WTC11 (cell line): ENCODE measurements at regions of chr21 and their contacts with region 1.

Region 1: DNA sequence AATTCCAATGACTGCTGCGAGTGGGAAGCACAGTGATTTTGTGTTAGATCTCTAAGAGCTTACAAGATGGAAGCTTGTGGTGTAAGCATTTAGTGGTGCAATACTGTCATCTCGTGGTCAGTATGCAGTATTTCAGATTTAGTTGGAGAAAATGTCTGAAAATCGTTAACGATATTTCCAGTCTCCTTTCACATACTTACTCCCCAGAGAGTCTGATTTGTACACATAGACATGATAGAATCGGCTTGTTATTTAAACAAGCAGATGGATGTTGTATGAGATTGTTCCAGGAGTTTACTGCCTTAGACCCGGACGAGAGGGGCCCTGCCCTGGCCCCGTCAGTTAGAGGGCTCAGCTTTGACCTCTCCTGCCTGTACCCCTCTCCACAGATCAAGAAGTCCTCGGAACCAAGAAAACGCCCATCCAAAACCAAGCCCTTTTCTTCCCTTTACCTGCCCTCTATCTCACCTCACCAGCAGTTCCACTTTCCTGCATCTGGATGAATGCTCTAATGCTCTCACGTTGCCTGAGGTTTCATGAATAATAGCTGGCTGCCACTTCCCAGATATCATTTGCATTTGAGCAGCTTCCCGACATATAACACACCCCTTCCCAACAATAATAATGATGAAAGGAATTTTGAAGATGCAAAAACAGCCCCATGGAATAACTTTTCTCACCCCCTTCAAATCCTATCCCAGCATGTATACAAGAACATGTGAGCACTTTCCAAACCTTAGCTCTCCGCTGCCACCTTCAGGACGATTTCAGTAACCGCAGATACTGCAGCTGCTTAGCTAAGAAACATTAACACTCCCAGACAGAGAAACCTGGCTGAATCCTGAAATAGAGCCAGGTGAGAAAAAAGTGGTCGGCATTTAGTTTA is 247.3 kb downstream of the LTN1 start:
- DNase-seq: peak; percentile 75
- ATAC-seq: peak; percentile 91
- H3K4me3 Mint-ChIP-seq: no peak overlapping the region
- H3K27ac Mint-ChIP-seq: no peak overlapping the region
- H3K4me1 Mint-ChIP-seq: no peaks in the 10 kb centered on the region
- H3K27me3 Mint-ChIP-seq: no peaks in the 10 kb centered on the region
- CTCF ChIP-seq: peak; percentile 64

Region 2: DNA sequence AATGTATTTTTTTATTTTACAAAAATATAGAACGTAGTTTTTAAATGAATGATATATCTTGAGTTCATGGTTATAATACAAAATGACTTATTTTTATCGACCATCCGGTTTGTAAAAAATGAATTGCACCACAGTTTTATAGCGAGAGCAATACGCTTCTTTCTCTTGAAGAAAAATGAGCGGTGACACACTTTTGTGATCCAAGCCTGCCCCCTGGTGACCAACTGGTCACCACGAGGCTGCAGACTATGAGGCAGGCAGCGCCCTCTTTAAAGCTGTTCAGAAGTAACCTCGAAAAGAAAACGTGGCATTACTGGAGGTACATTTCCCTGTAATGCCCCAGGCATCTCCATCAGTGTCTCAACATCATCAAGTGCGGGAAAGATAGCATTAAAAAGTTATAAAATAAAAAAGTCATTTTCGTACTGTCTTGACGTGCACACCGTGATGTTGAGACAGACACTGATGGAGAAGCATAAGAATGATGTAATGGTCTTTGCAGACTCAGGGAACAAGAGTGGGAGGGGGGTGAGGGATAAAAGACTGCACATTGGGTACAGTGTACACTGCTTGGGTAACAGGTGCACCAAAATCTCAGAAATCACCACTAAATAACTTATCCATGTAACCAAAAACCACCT is 1044.3 kb before region 1 on chr21:
- CTCF ChIA-PET with region 1: interaction called, 13 read pairs
- POLR2A ChIA-PET with region 1: no interaction called
- DNase-seq: peak; percentile 81
- ATAC-seq: peak; percentile 86
- H3K4me3 Mint-ChIP-seq: no peak overlapping the region
- H3K27ac Mint-ChIP-seq: no peak overlapping the region
- H3K4me1 Mint-ChIP-seq: no peaks in the 10 kb centered on the region
- H3K27me3 Mint-ChIP-seq: no peaks in the 10 kb centered on the region
- CTCF ChIP-seq: peak; percentile 75

Region 3: DNA sequence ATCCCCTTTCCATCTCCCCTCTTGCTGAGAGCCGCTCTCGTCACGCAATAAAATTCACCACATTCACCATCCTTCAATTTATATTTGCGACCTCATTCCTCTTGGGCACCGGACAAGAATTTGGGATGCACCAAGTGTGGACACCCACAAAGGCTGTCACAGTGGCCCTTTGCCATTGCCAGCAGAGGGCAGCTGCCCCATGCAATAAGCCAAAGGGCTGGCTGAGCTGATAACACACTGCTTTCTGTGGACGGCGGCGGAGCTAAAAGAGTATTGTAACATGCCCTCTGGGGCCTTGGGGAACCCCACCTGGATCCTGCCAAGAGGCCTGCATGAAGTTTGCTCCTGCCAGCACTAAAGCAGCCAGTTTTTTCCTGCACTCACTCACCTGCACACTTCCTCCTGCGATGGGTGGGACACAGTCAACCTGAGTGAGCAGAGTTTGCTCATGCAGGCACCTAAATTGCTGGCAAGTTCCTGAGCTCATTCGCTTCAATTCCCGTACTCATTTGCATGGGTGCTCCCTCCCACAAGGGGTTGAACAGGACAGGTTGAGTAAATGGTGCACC is 986.2 kb before region 1 on chr21:
- CTCF ChIA-PET with region 1: interaction called, 21 read pairs
- POLR2A ChIA-PET with region 1: no interaction called
- DNase-seq: peak; percentile 68
- ATAC-seq: peak; percentile 90
- H3K4me3 Mint-ChIP-seq: no peak overlapping the region
- H3K27ac Mint-ChIP-seq: peak overlapping the region; percentile 42; the same call in 1 of the 2 replicates
- H3K4me1 Mint-ChIP-seq: peaks cover 25% of the 10 kb centered on the region
- H3K27me3 Mint-ChIP-seq: no peaks in the 10 kb centered on the region
- CTCF ChIP-seq: no peak

Region 4: DNA sequence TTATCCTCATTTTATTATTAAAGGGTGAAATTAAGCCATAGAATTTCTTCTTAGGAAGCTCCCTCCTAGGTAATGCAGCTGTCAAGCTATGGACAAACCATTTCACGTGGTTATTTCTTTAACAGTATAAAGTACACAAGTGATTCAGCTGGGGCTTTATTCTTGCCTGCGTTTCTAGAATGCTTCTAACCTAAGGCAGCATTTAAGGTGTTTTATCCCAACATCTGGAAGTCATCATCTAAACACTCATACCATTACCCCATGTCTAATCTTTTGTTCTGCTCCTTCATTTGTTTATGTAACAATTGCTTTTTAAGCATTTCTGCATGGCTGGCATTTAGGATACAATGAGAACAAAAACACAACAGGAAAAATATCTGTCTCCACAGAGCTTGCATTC is 949.3 kb before region 1 on chr21:
- CTCF ChIA-PET with region 1: no interaction called
- POLR2A ChIA-PET with region 1: no interaction called
- DNase-seq: no peak
- ATAC-seq: no peak
- H3K4me3 Mint-ChIP-seq: no peak overlapping the region
- H3K27ac Mint-ChIP-seq: peak overlapping the region; percentile 13; the same call in 1 of the 2 replicates
- H3K4me1 Mint-ChIP-seq: peaks cover 22% of the 10 kb centered on the region
- H3K27me3 Mint-ChIP-seq: no peaks in the 10 kb centered on the region
- CTCF ChIP-seq: no peak

Region 5: DNA sequence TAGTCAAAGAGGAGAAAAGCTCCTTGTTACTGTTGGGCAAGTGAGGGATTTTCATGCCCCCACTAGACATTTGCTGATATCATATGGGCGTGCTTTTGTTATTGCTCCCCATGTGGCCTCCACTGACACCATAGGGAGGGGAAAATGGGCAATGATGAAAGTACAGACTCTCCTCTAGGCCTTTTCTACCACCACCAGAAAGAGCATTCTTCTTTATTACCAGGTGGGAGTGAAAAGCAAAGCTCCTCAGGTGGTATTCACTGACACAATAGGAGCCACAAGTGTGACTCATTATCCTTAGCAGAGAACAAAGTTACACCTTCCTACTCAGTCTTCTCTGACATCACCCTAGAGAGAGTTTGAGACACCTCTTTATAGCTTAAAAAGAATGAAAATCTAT is 419.8 kb before region 1 on chr21:
- CTCF ChIA-PET with region 1: interaction called, 11 read pairs
- POLR2A ChIA-PET with region 1: no interaction called
- DNase-seq: no peak
- ATAC-seq: peak; percentile 98
- H3K4me3 Mint-ChIP-seq: no peak overlapping the region
- H3K27ac Mint-ChIP-seq: peak overlapping the region; percentile 87
- H3K4me1 Mint-ChIP-seq: peaks cover 20% of the 10 kb centered on the region
- H3K27me3 Mint-ChIP-seq: no peaks in the 10 kb centered on the region
- CTCF ChIP-seq: no peak

Region 6: DNA sequence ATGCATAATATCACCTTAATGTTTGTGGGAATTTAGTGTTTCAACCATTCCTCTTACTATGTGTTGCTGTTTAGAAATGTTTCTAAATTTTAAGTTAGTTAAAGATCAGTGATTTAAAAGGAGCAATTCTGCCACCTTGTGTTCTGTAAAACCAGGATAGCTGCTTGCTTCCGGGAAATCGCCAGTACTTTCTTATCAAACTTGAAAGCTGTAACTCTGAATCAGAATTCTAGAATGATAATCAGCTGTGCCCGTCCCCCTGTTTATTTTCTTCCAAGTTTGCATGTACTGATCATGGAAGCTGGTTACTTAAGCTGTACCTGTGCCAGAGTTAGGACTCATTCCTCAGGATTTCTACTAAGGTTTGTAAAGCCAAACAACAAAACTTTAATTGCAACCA is 409.1 kb before region 1 on chr21:
- CTCF ChIA-PET with region 1: interaction called, 26 read pairs
- POLR2A ChIA-PET with region 1: no interaction called
- DNase-seq: no peak
- ATAC-seq: no peak; the same call in 1 of the 2 replicates
- H3K4me3 Mint-ChIP-seq: no peak overlapping the region
- H3K27ac Mint-ChIP-seq: no peak overlapping the region
- H3K4me1 Mint-ChIP-seq: peaks cover 3% of the 10 kb centered on the region; the same call in 1 of the 2 replicates
- H3K27me3 Mint-ChIP-seq: no peaks in the 10 kb centered on the region
- CTCF ChIP-seq: peak; percentile 24; the same call in 1 of the 2 replicates

Region 7: DNA sequence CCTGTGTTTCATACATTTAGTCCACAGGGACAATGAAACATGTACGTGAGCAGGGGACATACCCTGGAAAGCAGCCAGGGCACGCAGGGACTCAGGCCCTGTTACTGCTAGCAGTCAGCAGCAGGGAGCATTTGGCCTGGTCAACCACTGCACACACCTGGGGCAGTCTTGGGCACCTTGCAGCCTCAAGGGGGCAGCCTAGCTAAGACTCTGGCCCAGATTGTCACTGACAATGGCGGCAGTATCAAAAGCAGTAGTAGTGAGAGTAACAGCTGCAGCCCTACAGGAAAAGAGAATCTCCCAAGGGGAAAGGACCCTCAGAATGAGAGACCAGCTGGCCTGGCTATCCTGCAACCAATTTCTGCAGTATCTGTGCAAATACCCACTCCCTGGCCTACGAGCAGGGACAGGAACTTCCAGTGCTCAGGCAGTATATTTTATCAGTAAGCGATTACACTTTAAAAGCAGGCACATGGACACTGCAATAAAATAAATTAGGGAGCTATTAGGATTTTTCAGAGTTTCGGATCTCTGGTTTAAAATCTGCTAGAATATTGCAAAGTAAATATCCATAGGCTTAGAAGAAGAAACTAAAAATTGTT is 228.3 kb before region 1 on chr21:
- CTCF ChIA-PET with region 1: interaction called, 58 read pairs
- POLR2A ChIA-PET with region 1: interaction called, 5 read pairs
- DNase-seq: peak; percentile 88
- ATAC-seq: peak; percentile 100
- H3K4me3 Mint-ChIP-seq: no peak overlapping the region
- H3K27ac Mint-ChIP-seq: peak overlapping the region; percentile 60; the same call in 1 of the 2 replicates
- H3K4me1 Mint-ChIP-seq: peaks cover 12% of the 10 kb centered on the region
- H3K27me3 Mint-ChIP-seq: no peaks in the 10 kb centered on the region
- CTCF ChIP-seq: peak; percentile 45; the same call in 1 of the 2 replicates

Region 8: DNA sequence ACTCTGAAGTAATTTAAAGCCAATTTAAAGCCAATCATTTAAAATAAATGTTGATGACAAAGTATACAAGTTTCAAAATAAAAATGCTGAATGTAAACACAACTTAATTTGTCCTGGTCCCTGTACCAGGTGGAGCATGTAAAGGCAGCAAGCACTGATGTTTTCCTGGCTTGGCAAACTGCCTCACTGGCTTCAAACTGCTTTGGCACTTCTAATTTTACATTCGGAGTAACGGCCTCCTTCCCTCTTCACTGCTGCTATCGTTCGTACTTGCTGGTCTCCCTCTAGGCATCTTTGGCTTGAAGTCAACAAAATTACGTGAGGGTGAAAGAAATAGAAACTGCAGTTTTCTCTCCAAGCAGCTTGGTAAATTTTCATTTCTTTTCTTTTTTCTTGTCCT is 40.6 kb before region 1 on chr21:
- CTCF ChIA-PET with region 1: no interaction called
- POLR2A ChIA-PET with region 1: no interaction called
- DNase-seq: no peak
- ATAC-seq: no peak
- H3K4me3 Mint-ChIP-seq: no peak overlapping the region
- H3K27ac Mint-ChIP-seq: no peak overlapping the region
- H3K4me1 Mint-ChIP-seq: no peaks in the 10 kb centered on the region
- H3K27me3 Mint-ChIP-seq: no peaks in the 10 kb centered on the region
- CTCF ChIP-seq: no peak

Region 9: GRCh38 chr21:28758042-28758882 is 12.9 kb after region 1 on chr21:
- CTCF ChIA-PET with region 1: interaction called, 24 read pairs
- POLR2A ChIA-PET with region 1: interaction called, 3 read pairs
- DNase-seq: no peak
- ATAC-seq: no peak
- H3K4me3 Mint-ChIP-seq: no peak overlapping the region
- H3K27ac Mint-ChIP-seq: no peak overlapping the region
- H3K4me1 Mint-ChIP-seq: peaks cover 30% of the 10 kb centered on the region
- H3K27me3 Mint-ChIP-seq: no peaks in the 10 kb centered on the region
- CTCF ChIP-seq: no peak

Region 10: GRCh38 chr21:29073222-29074006 is 328.0 kb after region 1 on chr21 and contains the start of gene CCT8:
- CTCF ChIA-PET with region 1: no interaction called
- POLR2A ChIA-PET with region 1: no interaction called
- DNase-seq: peak; percentile 97
- ATAC-seq: peak; percentile 96
- H3K4me3 Mint-ChIP-seq: peak within 1 kb of the TSS; percentile 98
- H3K27ac Mint-ChIP-seq: peak within 1 kb of the TSS; percentile 97
- H3K4me1 Mint-ChIP-seq: peaks cover 19% of the 10 kb centered on the region
- H3K27me3 Mint-ChIP-seq: no peaks in the 10 kb centered on the region
- CTCF ChIP-seq: no peak
- total RNA-seq, gene CCT8: 329 to 335 TPM (median 333 TPM) in 3 replicates